Activated CD8-positive, alpha-beta T cell treated with anti-CD3 and anti-CD28 coated beads, Interleukin-2, amount 10 ng/mL, durations not matched to agents 7 days and 5 days (primary cell): ENCODE measurements at regions of chr18 and their contacts with region 1.

Region 1: GRCh38 chr18:11937874-11938478 is 29.9 kb upstream of the MPPE1 start:
- DNase-seq: peak; percentile 82
- ATAC-seq: peak; percentile 69
- H3K4me3 Mint-ChIP-seq: no peak overlapping the region
- H3K27ac Mint-ChIP-seq: no peak overlapping the region
- H3K4me1 Mint-ChIP-seq: no peaks in the 10 kb centered on the region
- H3K27me3 Mint-ChIP-seq: no peaks in the 10 kb centered on the region

Region 2: GRCh38 chr18:11980555-11981382 is 42.8 kb after region 1 on chr18:
- CTCF ChIA-PET with region 1: interaction called, 29 read pairs
- POLR2A ChIA-PET with region 1: no interaction called
- DNase-seq: peak; percentile 98
- ATAC-seq: peak; percentile 94
- H3K4me3 Mint-ChIP-seq: peak overlapping the region; percentile 87
- H3K27ac Mint-ChIP-seq: peak overlapping the region; percentile 78
- H3K4me1 Mint-ChIP-seq: peaks cover 17% of the 10 kb centered on the region
- H3K27me3 Mint-ChIP-seq: peaks cover 3% of the 10 kb centered on the region

Region 3: DNA sequence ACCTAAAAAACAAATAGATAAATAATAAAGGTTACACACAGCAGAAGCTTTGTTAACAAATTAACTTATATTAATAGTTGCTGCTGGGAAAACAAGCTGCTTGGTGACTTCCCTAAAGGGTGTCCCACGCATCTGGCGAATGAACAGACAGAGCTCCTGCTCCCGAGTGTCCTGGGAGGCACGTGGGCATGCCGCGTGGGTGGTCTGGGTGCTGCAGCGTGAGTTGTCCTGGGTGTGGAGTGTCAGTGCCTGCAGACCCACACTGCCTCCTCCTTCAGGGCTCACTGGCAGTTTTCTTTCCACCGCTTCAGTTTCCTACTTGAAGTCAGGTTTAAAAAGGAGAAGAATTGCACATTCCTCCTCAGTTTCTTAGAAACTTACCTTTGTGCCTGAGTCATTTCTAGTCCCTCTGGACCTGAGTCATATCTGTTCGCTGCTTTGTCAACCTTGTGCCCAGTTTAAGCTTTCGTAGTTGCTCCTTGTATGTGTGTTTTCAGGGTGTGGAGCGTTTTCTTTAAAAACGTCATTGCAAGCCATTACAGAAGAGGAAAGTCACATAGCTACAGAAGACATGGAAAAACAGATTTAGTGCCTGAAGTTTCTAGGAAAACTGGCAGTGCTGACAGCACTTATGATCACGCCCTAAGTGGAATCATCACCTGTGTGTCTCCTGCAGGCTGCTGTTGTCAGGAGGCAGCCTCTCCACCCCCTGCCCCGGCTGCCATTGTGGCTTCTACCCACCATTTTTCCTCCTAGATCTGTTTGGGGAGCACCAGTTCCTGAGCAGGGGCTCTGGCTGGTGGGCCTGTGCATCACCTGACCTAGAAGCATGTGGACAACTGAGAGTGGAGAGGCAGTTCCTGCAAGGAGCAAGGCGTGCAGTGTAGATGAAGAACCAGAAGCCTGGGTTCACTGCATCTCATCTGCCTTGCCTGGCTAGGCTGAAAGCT is 67.8 kb after region 1 on chr18:
- CTCF ChIA-PET with region 1: interaction called, 282 read pairs
- POLR2A ChIA-PET with region 1: no interaction called
- DNase-seq: no peak
- ATAC-seq: no peak
- H3K4me3 Mint-ChIP-seq: no peak overlapping the region
- H3K27ac Mint-ChIP-seq: no peak overlapping the region
- H3K4me1 Mint-ChIP-seq: no peaks in the 10 kb centered on the region
- H3K27me3 Mint-ChIP-seq: no peaks in the 10 kb centered on the region

Region 4: DNA sequence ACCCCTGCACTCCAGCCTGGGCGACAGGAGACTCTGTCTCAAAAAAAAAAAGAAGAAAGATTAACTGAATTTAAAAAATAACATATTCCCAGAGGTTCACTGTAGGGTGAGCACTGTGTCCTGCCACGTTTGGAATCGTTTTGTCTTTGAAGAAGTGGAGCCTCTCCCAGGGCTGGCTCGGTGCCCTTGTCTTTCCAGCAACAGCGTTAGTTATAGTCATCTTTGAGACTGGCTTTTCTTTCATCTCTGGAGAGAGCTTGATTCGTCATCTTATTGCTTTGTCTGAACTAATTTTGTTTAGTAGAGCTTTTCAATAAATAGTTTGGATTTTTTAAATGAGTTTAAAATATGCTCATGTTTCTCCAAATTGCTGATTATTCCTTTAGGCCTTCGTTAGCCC is 93.9 kb after region 1 on chr18:
- CTCF ChIA-PET with region 1: interaction called, 15 read pairs
- POLR2A ChIA-PET with region 1: no interaction called
- DNase-seq: no peak
- ATAC-seq: no peak
- H3K4me3 Mint-ChIP-seq: no peak overlapping the region
- H3K27ac Mint-ChIP-seq: no peak overlapping the region
- H3K4me1 Mint-ChIP-seq: no peaks in the 10 kb centered on the region
- H3K27me3 Mint-ChIP-seq: no peaks in the 10 kb centered on the region